ENCODE measurements at regions of chr2 and their contacts with region 1.

Region 1: DNA sequence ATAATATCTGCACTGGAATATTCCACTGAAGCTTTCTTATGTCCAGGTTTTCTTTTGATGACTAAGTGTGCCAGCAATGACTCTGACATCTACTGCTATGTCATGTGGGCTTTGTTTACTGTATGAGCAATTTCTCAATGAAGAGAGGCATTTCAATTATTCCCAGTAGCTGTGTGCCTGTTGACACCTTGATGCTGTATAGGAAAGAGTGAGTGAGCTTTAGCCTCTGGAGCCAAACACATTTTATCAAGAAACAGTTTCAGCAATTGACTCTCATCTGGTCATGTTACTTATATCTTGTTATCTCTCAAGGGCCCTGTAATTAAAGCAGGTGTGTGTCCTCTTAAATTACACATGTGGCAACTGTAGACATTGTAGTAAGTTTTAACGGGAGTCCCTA is 493.2 kb upstream of the FANCL start:
- H3K4me3 Mint-ChIP-seq: no peak overlapping the region
- H3K27ac Mint-ChIP-seq: no peak overlapping the region
- H3K4me1 Mint-ChIP-seq: peaks cover 54% of the 10 kb centered on the region
- H3K27me3 Mint-ChIP-seq: no peaks in the 10 kb centered on the region

Region 2: DNA sequence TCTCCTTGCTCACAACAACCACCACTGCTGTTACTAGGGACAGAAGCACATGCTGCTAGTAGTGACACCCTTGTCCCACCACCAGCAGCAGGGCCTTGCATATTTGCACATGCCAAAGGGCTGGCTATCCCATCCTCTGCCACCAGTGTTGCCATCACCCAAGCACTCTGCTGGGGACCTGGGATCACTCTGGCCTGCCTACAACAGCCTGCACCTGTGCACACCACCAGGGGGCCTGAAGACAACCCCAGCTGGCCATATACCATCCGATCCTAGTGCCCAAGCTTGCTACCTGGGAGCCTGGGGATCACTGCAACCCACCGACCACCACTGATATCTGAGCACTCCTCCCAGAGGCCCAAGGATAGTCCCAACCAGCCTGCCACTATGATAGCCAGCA is 393.3 kb before region 1 on chr2:
- intact Hi-C with region 1: no loop called
- H3K4me3 Mint-ChIP-seq: no peak overlapping the region
- H3K27ac Mint-ChIP-seq: no peak overlapping the region
- H3K4me1 Mint-ChIP-seq: peaks cover 9% of the 10 kb centered on the region
- H3K27me3 Mint-ChIP-seq: no peaks in the 10 kb centered on the region

Region 3: GRCh38 chr2:58601017-58601416 is 133.3 kb before region 1 on chr2:
- intact Hi-C with region 1: loop called (anchors 10 kb)
- H3K4me3 Mint-ChIP-seq: no peak overlapping the region
- H3K27ac Mint-ChIP-seq: no peak overlapping the region
- H3K4me1 Mint-ChIP-seq: no peaks in the 10 kb centered on the region
- H3K27me3 Mint-ChIP-seq: no peaks in the 10 kb centered on the region

Region 4: DNA sequence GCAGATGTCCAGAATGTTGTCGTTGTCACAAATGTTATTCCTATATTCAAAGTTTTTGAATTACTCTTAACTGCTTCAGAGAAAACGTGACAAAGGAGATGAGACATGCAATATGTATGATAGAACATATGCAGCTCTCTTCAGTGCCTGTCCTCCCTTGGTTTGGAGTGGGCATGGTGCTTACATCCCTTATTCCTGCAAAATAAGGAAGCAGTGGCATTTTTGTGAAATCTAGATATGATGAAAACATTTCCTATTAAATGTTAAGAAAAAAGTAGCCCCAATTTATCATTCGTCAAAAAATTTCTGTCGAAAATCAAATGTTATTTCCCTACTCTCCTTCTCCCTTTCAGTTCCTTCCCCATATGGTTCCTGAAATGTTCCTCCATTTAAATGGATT is 35.7 kb before region 1 on chr2:
- intact Hi-C with region 1: loop called (anchors 5 kb)
- H3K4me3 Mint-ChIP-seq: no peak overlapping the region
- H3K27ac Mint-ChIP-seq: peak overlapping the region; percentile 93
- H3K4me1 Mint-ChIP-seq: peaks cover 30% of the 10 kb centered on the region
- H3K27me3 Mint-ChIP-seq: no peaks in the 10 kb centered on the region